OCI-LY7 (cell line): ENCODE measurements at regions of chr13 and their contacts with region 1.

Region 1: GRCh38 chr13:37023871-37024270 is 23.3 kb downstream of the EXOSC8 start:
- DNase-seq: no peak
- H3K4me3 ChIP-seq: no peak overlapping the region
- H3K27ac ChIP-seq: no peak overlapping the region
- H3K4me1 ChIP-seq: no peaks in the 10 kb centered on the region
- CTCF ChIP-seq: no peak

Region 2: DNA sequence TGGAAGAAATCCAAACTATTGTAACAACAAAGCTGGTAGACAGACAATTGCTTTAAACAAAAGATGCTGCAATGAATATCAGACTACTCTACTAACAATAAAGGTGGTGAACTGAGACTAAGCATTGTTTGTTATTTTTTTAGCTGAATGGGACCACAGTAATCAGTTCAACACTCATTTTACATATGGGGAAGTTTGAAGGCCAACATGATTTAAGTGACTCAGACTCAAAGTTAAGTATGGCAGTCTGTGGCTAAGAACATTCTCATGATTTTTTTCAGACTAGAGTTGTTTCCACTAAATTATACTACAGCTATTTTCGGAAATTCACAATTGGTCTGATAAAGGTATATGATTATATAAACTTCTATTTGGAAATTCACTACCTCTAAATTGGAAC is 12.9 kb before region 1 on chr13:
- CTCF ChIA-PET with region 1: no interaction called
- POLR2A ChIA-PET with region 1: interaction called, 10 read pairs
- intact Hi-C with region 1: no loop called
- DNase-seq: no peak
- H3K4me3 ChIP-seq: no peak overlapping the region
- H3K27ac ChIP-seq: no peak overlapping the region
- H3K4me1 ChIP-seq: peaks cover 3% of the 10 kb centered on the region
- CTCF ChIP-seq: no peak